Gastrocnemius medialis (tissue), 4 donors: ENCODE measurements at regions of chr11 and their contacts with region 1.

Region 1: GRCh38 chr11:64742889-64743590 is 902 bp downstream of the RASGRP2 start:
- DNase-seq: peak; percentile 48 to 84
- ATAC-seq: peak; percentile 55 to 61
- H3K4me3 ChIP-seq: peak overlapping the region; percentile 59 to 88 (median 76)
- H3K27ac ChIP-seq: peak overlapping the region; percentile 86 to 99 (median 93)
- H3K4me1 ChIP-seq: peaks cover 16 to 32% of the 10 kb centered on the region in 2 donors
- H3K27me3 ChIP-seq: no peaks in the 10 kb centered on the region
- CTCF ChIP-seq: peak; percentile 76 to 96 (median 95)
- POLR2A ChIP-seq: peak; percentile 37 to 68

Region 2: GRCh38 chr11:64762674-64763525 is 19.9 kb after region 1 on chr11:
- in situ Hi-C with region 1: no loop called
- intact Hi-C with region 1: loop called (anchors 1 kb)
- DNase-seq: peak in 1 of 2 donors; percentile 97
- ATAC-seq: peak; percentile 24 to 57
- H3K4me3 ChIP-seq: peak overlapping the region in 1 of 4 donors; percentile 24
- H3K27ac ChIP-seq: peak overlapping the region; percentile 91 to 99 (median 94)
- H3K4me1 ChIP-seq: peaks cover 79 to 85% of the 10 kb centered on the region in 2 donors
- H3K27me3 ChIP-seq: no peaks in the 10 kb centered on the region
- CTCF ChIP-seq: no peak
- POLR2A ChIP-seq: peak in 1 of 2 donors; percentile 24